CD8-positive, alpha-beta T cell (primary cell): ENCODE measurements at regions of chr21 and their contacts with region 1.

Region 1: DNA sequence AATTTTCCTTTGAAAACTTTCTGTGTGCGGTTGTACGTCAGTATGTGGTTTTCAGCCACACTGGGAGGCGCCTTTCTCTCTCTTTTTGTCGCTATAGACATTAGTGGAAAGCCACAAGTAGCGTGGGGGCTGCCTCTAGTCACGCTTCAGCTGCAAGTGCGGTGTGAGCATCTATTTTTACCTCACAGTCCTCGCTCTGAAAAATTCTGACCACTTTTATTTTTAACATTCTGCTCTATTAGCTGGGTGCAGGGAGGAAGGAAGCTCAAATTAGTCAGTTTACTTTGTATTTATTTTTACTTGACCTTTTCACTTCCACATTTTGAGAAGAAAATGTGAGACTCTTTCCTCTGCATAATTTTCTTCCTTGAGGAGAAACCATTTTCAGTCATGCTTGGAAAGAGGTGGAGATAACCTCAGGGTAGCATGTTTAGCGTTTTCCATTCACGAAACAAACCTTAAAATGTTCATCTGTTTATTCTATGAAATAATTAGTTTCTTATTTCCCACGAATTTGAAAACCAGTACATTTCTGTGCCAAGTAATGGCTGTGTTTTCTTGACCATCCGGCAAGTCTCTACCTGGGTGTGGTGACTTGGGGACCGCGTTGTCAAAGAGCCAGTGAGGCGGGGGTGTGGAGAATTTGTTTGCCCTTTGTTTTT is 35.6 kb downstream of the ADARB1 start:
- DNase-seq: peak in 5 of 9 experiments; percentile 33 to 73 (median 52)
- ATAC-seq: peak; percentile 76
- H3K4me3 ChIP-seq: peak overlapping the region; percentile 43 to 51
- H3K4me3 Mint-ChIP-seq: peak overlapping the region; percentile 81
- H3K27ac ChIP-seq: peak overlapping the region; percentile 14 to 59
- H3K27ac Mint-ChIP-seq: peak overlapping the region; percentile 76
- H3K4me1 ChIP-seq: peaks cover 35% of the 10 kb centered on the region
- H3K4me1 Mint-ChIP-seq: peaks cover 62% of the 10 kb centered on the region
- H3K27me3 ChIP-seq: no peaks in the 10 kb centered on the region
- H3K27me3 Mint-ChIP-seq: no peaks in the 10 kb centered on the region
- CTCF ChIP-seq: no peak

Region 2: DNA sequence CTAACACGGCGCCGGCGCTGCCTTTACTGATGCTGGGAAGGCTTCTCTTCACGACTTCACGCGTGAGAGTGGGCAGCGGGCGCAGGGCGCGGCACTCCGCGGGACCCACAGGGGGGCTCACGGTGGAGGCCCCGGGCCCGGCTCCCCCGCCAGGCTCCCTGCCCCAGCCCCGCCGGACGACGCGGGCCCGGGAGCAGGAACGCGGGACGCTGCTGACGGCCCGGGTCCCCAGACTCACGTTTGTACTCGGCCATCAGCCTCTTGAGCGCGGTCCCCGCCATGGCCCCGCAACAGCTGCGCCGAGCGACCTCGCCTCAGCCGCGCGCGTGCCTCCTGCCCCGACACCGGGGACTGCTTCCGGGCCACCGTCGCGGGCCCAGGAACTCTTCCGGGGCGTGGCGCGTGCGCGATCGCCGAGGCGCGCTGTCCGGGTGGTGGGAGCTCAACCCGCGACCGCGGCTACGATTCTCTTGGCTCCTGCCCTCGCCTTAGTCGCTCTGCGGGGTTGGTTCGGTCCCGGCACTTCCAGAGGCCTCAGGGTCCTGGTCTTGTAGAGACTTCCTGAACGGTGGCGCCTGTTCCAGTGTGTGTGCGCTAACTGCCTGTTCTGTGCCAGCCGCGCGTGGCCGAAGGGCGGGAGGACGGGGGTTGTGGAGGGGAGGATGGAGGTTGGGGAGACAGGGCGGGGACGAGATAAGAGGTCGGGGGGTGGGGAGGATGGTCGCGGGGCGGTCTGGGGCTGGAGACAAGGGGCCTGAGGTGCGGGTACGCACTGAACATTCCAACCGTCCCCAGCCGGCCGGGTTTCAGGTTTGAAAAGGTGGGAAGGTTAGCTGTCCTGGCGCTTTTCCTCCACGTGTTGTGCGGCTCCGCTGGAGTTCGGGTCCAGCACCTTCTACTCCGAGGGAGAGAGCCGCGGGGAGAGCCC is 308.2 kb before region 1 on chr21 and contains the start of gene UBE2G2:
- CTCF ChIA-PET with region 1: no interaction called
- POLR2A ChIA-PET with region 1: no interaction called
- intact Hi-C with region 1: no loop called
- DNase-seq: peak; percentile 70 to 91 (median 85)
- ATAC-seq: peak; percentile 88
- H3K4me3 ChIP-seq: peak within 1 kb of the TSS; percentile 76 to 95
- H3K4me3 Mint-ChIP-seq: peak within 1 kb of the TSS; percentile 95
- H3K27ac ChIP-seq: peak within 1 kb of the TSS; percentile 64 to 71
- H3K27ac Mint-ChIP-seq: peak within 1 kb of the TSS; percentile 92
- H3K4me1 ChIP-seq: peaks cover 20% of the 10 kb centered on the region
- H3K4me1 Mint-ChIP-seq: peaks cover 47% of the 10 kb centered on the region
- H3K27me3 ChIP-seq: no peaks in the 10 kb centered on the region
- H3K27me3 Mint-ChIP-seq: no peaks in the 10 kb centered on the region
- CTCF ChIP-seq: peak; percentile 52
- total RNA-seq, gene UBE2G2: 88.8 to 89.1 TPM

Region 3: GRCh38 chr21:45087022-45087823 is 22.7 kb before region 1 on chr21:
- CTCF ChIA-PET with region 1: no interaction called
- POLR2A ChIA-PET with region 1: interaction called, 5 read pairs
- intact Hi-C with region 1: loop called in 1 of 2 experiments (anchors 2 kb)
- DNase-seq: peak in 3 of 9 experiments; percentile 47 to 68 (median 49)
- ATAC-seq: peak; percentile 53
- H3K4me3 ChIP-seq: peak overlapping the region in 1 of 2 experiments; percentile 2
- H3K4me3 Mint-ChIP-seq: peak overlapping the region; percentile 67
- H3K27ac ChIP-seq: no peak overlapping the region
- H3K27ac Mint-ChIP-seq: peak overlapping the region; percentile 49
- H3K4me1 ChIP-seq: peaks cover 75% of the 10 kb centered on the region
- H3K4me1 Mint-ChIP-seq: peaks cover 74% of the 10 kb centered on the region
- H3K27me3 ChIP-seq: no peaks in the 10 kb centered on the region
- H3K27me3 Mint-ChIP-seq: no peaks in the 10 kb centered on the region
- CTCF ChIP-seq: no peak

Region 4: GRCh38 chr21:45154511-45155508 is 44.8 kb after region 1 on chr21:
- CTCF ChIA-PET with region 1: no interaction called
- POLR2A ChIA-PET with region 1: no interaction called
- intact Hi-C with region 1: no loop called
- DNase-seq: peak in 7 of 9 experiments; percentile 16 to 56 (median 45)
- ATAC-seq: peak; percentile 71
- H3K4me3 ChIP-seq: no peak overlapping the region
- H3K4me3 Mint-ChIP-seq: no peak overlapping the region
- H3K27ac ChIP-seq: no peak overlapping the region
- H3K27ac Mint-ChIP-seq: peak overlapping the region; percentile 10
- H3K4me1 ChIP-seq: peaks cover 39% of the 10 kb centered on the region
- H3K4me1 Mint-ChIP-seq: peaks cover 35% of the 10 kb centered on the region
- H3K27me3 ChIP-seq: no peaks in the 10 kb centered on the region
- H3K27me3 Mint-ChIP-seq: no peaks in the 10 kb centered on the region
- CTCF ChIP-seq: no peak

Region 5: DNA sequence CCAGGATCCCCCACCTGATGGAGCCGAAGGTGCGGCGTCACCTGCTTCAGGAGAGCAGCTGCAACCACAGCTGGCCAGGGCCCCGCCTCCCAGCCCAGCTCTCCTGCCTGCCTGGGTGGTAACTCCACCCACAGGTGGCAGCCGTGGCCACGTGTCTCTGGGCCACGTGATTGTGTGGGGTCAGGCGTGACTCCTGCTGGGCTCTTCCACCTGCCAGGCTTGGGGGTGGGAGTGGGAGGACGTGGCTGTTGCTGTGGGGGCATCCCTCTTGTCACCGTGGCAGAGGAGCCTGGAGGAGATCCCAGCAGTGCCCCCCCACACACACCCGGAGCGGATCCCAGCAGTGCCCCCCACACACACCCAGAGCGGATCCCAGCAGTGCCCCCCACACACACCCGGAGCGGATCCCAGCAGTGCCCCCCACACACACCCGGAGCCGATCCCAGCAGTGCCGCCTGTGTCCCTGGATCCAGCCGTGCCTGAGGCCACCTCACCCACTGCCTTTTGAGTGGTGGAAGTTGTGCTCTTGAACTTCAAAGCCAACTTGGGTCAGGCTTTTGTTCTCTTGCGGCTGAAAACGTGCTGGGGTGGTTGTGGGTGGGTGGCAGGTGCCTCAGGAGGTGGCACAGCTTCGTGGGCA is 145.5 kb after region 1 on chr21:
- CTCF ChIA-PET with region 1: no interaction called
- POLR2A ChIA-PET with region 1: no interaction called
- intact Hi-C with region 1: no loop called
- DNase-seq: peak in 4 of 9 experiments; percentile 36 to 68 (median 48)
- ATAC-seq: peak; percentile 70
- H3K4me3 ChIP-seq: no peak overlapping the region
- H3K4me3 Mint-ChIP-seq: peak overlapping the region; percentile 47
- H3K27ac ChIP-seq: no peak overlapping the region
- H3K27ac Mint-ChIP-seq: no peak overlapping the region
- H3K4me1 ChIP-seq: peaks cover 26% of the 10 kb centered on the region
- H3K4me1 Mint-ChIP-seq: peaks cover 15% of the 10 kb centered on the region
- H3K27me3 ChIP-seq: peaks cover 3 to 20% of the 10 kb centered on the region in 2 experiments
- H3K27me3 Mint-ChIP-seq: peaks cover 11% of the 10 kb centered on the region
- CTCF ChIP-seq: no peak

Region 6: DNA sequence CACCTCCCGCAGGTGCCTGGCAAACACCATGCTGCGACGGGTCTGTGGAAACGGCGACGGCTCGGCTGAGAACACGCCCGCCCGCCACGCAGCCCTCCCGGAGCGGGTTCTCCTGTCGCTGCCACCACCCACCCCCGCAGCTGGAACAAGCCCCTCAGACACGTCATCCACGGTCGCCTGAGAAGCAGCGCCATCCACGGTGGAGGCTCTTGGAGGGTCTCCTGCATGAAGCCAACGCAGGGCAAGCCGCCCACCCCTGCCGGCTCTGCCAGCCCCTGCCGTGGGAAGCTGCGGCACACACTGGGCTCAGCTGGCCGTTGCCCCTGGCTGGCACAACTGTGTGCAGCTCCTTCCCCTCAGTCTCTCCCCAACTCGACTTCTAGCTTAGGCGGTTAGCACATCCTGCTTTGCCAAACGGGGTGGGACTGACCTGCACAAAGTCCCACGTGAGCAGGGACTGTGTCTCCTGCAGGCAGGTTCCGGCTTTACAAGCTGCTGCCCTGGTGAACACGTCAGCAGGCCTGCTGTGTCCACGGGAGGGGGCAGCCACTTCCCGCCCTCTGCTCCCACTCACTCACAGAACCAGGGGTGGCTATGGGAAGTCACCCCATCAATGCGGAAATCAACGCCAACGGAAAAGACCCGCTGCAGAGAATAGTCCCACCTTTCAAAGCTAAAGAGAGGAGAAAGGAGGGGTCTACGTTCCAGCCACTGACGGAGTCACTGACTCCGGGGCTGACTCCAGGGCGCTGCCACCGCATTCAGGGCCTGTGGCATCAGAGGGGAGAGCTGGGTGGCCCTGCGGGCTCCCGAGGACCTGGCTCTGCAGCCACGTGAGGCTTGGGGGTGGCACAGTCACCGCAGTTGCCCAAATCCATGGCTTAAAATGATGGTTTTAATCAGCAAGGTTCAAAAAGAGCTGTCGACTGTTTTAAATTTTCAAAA is 167.4 kb after region 1 on chr21:
- CTCF ChIA-PET with region 1: no interaction called
- POLR2A ChIA-PET with region 1: no interaction called
- intact Hi-C with region 1: no loop called
- DNase-seq: peak in 3 of 9 experiments; percentile 1 to 36 (median 5)
- ATAC-seq: no peak
- H3K4me3 ChIP-seq: no peak overlapping the region
- H3K4me3 Mint-ChIP-seq: no peak overlapping the region
- H3K27ac ChIP-seq: no peak overlapping the region
- H3K27ac Mint-ChIP-seq: no peak overlapping the region
- H3K4me1 ChIP-seq: no peaks in the 10 kb centered on the region
- H3K4me1 Mint-ChIP-seq: no peaks in the 10 kb centered on the region
- H3K27me3 ChIP-seq: no peaks in the 10 kb centered on the region
- H3K27me3 Mint-ChIP-seq: no peaks in the 10 kb centered on the region
- CTCF ChIP-seq: no peak